ENCODE measurements at regions of chr15 and their contacts with region 1.

Region 1: GRCh38 chr15:75732809-75733451 is 20.3 kb upstream of the CSPG4 start:
- DNase-seq: peak in 1 of 2 donors; percentile 83
- H3K4me3 ChIP-seq: no peak overlapping the region
- H3K27ac ChIP-seq: no peak overlapping the region
- H3K4me1 ChIP-seq: peaks cover 0 to 3% of the 10 kb centered on the region in 2 donors
- H3K27me3 ChIP-seq: no peaks in the 10 kb centered on the region
- CTCF ChIP-seq: peak; percentile 88 to 97 (median 90)

Region 2: GRCh38 chr15:75090388-75090734 is 642.6 kb before region 1 on chr15:
- intact Hi-C with region 1: no loop called
- DNase-seq: peak; percentile 36 to 86
- H3K4me3 ChIP-seq: peak overlapping the region in 1 of 2 donors; percentile 14
- H3K27ac ChIP-seq: peak overlapping the region; percentile 75 to 82
- H3K4me1 ChIP-seq: peaks cover 0 to 9% of the 10 kb centered on the region in 2 donors
- H3K27me3 ChIP-seq: no peaks in the 10 kb centered on the region
- CTCF ChIP-seq: no peak

Region 3: DNA sequence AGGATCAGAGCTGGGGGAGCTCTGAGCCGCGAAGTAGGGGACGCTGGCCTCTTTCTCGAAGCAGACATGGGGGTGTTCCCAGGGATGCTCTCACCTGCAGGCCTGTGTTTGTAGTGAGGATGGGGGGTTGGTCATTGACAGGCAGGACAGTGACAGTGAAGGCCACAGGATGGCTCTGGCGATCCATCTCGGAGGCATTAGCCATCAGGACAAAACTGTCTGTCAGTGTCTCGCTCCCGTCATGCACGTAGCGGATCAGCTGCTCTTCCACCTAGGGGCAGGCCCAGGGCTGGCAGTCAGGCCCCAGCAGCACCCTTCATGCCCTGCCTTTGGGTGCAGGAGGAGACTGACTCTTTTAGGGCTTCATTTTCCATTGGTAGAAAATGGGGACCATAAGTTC is 48.3 kb before region 1 on chr15:
- intact Hi-C with region 1: loop called (anchors 2 kb)
- DNase-seq: no peak
- H3K4me3 ChIP-seq: no peak overlapping the region
- H3K27ac ChIP-seq: peak overlapping the region in 1 of 2 donors; percentile 18
- H3K4me1 ChIP-seq: peaks cover 0 to 9% of the 10 kb centered on the region in 2 donors
- H3K27me3 ChIP-seq: no peaks in the 10 kb centered on the region
- CTCF ChIP-seq: no peak

Region 4: DNA sequence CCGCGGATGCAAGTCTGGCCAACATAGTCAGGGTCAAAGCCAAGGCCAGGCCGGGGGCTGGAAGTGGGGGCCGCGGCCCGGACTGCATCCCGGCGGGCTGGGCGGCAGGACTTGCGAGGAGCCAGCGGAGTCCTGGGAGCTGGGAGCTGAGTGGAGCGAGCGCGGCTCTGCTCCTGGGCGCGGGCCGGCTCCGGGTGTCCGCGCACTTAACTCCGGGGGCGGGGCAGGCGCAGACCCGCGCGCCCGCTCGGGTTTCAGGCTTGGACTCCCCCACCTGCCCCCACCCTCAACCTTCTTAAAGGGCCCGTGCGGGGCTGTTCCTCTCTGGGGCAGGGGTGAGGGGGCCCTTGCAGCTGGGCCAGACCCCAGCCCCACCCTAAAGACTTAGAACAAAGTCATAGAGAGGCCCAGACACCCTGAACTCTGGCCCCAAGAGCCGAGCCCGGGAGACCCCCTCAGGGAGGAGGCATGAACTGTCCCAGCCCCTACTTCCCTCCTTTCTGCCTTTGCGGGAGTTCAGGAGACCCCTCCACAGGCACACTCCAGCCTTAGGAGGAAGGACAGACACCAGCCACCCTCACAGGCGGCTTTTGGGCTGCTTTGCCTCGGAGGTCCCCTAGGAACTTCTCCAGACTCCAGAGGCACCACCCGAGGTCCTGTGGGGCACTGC is 20.1 kb before region 1 on chr15 and contains the start of gene CSPG4:
- intact Hi-C with region 1: loop called (anchors 2 kb)
- DNase-seq: peak in 1 of 2 donors; percentile 87
- H3K4me3 ChIP-seq: peak within 1 kb of the TSS; percentile 65 to 83
- H3K27ac ChIP-seq: peak within 1 kb of the TSS; percentile 95 to 96
- H3K4me1 ChIP-seq: peaks cover 17 to 31% of the 10 kb centered on the region in 2 donors
- H3K27me3 ChIP-seq: no peaks in the 10 kb centered on the region
- CTCF ChIP-seq: no peak
- total RNA-seq, gene CSPG4: 258 TPM

Region 5: DNA sequence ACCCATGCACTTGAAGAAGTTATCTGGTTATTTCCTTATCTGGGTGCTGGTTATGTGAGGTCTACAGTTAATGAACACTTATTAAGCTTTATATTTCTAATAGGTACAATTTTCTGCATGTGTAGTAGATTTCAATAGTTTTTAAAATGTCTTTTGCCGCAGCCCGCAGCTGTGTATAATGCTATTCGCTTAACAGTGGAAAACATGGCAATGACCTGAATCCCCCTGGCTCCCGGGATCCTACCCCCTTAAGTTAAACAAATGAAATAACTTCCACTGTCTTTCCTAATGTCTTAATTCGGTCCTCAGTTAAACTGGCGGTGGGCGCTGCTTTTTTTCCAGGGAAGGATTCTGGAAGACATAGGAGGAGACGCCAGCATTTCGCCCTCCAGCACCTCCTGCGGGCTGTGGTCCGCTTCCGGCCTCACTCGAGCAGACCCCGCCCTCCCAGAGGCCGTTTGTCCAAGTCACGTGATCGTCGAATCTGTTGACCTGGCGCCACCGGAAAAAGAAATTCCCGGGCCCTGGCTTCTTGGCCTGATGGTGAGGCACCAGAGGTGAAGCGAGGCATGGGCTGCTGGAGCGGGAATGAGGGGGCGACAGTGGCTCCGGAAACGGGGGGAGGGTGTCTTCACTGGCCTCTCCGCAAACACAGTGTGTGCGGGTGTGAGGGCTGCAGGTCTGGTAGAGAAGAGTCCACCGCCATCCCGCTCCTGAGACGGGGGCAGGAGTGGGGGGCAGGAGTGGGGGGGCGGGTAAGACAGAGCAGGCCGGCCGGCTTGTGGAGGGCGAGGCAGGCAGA is 25.3 kb after region 1 on chr15:
- intact Hi-C with region 1: loop called (anchors 2 kb)
- DNase-seq: peak; percentile 46 to 94
- H3K4me3 ChIP-seq: peak overlapping the region; percentile 59 to 62
- H3K27ac ChIP-seq: peak overlapping the region; percentile 75 to 79
- H3K4me1 ChIP-seq: peaks cover 3 to 12% of the 10 kb centered on the region in 2 donors
- H3K27me3 ChIP-seq: no peaks in the 10 kb centered on the region
- CTCF ChIP-seq: peak in 2 of 3 experiments; percentile 22 to 43

Region 6: GRCh38 chr15:75786575-75786947 is 53.6 kb after region 1 on chr15:
- intact Hi-C with region 1: no loop called
- DNase-seq: peak in 1 of 2 donors; percentile 25
- H3K4me3 ChIP-seq: no peak overlapping the region
- H3K27ac ChIP-seq: no peak overlapping the region
- H3K4me1 ChIP-seq: no peaks in the 10 kb centered on the region
- H3K27me3 ChIP-seq: no peaks in the 10 kb centered on the region
- CTCF ChIP-seq: no peak